Caco-2 (cell line): ENCODE measurements at regions of chr17 and their contacts with region 1.

Region 1: GRCh38 chr17:49677933-49678847 is at the start of gene SPOP:
- DNase-seq: peak; percentile 100
- H3K4me3 ChIP-seq: peak within 1 kb of the TSS; percentile 68
- H3K4me3 Mint-ChIP-seq: peak within 1 kb of the TSS; percentile 83
- H3K27ac Mint-ChIP-seq: peak within 1 kb of the TSS; percentile 92
- H3K4me1 ChIP-seq: peaks cover 5% of the 10 kb centered on the region; the same call in 1 of the 2 replicates
- H3K4me1 Mint-ChIP-seq: peaks cover 24% of the 10 kb centered on the region
- H3K27me3 ChIP-seq: no peaks in the 10 kb centered on the region
- H3K27me3 Mint-ChIP-seq: no peaks in the 10 kb centered on the region
- CTCF ChIP-seq: no peak
- total RNA-seq, gene SPOP: 70.2 and 78.4 TPM in 2 replicates

Region 2: GRCh38 chr17:49496183-49496866 is 181.9 kb before region 1 on chr17:
- CTCF ChIA-PET with region 1: interaction called, 4 read pairs
- POLR2A ChIA-PET with region 1: no interaction called
- intact Hi-C with region 1: loop called (anchors 5 kb)
- DNase-seq: peak in 1 of 2 experiments; percentile 95
- H3K4me3 ChIP-seq: peak overlapping the region; percentile 34
- H3K4me3 Mint-ChIP-seq: peak overlapping the region; percentile 67
- H3K27ac Mint-ChIP-seq: no peak overlapping the region
- H3K4me1 ChIP-seq: peaks cover 27% of the 10 kb centered on the region
- H3K4me1 Mint-ChIP-seq: peaks cover 14% of the 10 kb centered on the region
- H3K27me3 ChIP-seq: peaks cover 29% of the 10 kb centered on the region
- H3K27me3 Mint-ChIP-seq: peaks cover 59% of the 10 kb centered on the region
- CTCF ChIP-seq: peak; percentile 87 to 99

Region 3: GRCh38 chr17:49575579-49576087 is 102.6 kb before region 1 on chr17 and contains the start of gene NXPH3:
- CTCF ChIA-PET with region 1: interaction called, 44 read pairs
- POLR2A ChIA-PET with region 1: interaction called, 10 read pairs
- intact Hi-C with region 1: loop called (anchors 1 kb)
- DNase-seq: peak; percentile 89 to 98
- H3K4me3 ChIP-seq: peak within 1 kb of the TSS; percentile 87
- H3K4me3 Mint-ChIP-seq: peak within 1 kb of the TSS; percentile 77
- H3K27ac Mint-ChIP-seq: no peak within 1 kb of the TSS
- H3K4me1 ChIP-seq: peaks cover 16% of the 10 kb centered on the region
- H3K4me1 Mint-ChIP-seq: peaks cover 14% of the 10 kb centered on the region
- H3K27me3 ChIP-seq: no peaks in the 10 kb centered on the region; the same call in 1 of the 2 replicates
- H3K27me3 Mint-ChIP-seq: peaks cover 22% of the 10 kb centered on the region
- CTCF ChIP-seq: peak; percentile 59 to 80
- total RNA-seq, gene NXPH3: 1.7 and 2.0 TPM in 2 replicates

Region 4: GRCh38 chr17:49597928-49598655 is 80.1 kb before region 1 on chr17:
- CTCF ChIA-PET with region 1: interaction called, 13 read pairs
- POLR2A ChIA-PET with region 1: interaction called, 6 read pairs
- intact Hi-C with region 1: no loop called
- DNase-seq: no peak
- H3K4me3 ChIP-seq: no peak overlapping the region
- H3K4me3 Mint-ChIP-seq: no peak overlapping the region
- H3K27ac Mint-ChIP-seq: no peak overlapping the region
- H3K4me1 ChIP-seq: peaks cover 4% of the 10 kb centered on the region; the same call in 1 of the 2 replicates
- H3K4me1 Mint-ChIP-seq: peaks cover 15% of the 10 kb centered on the region
- H3K27me3 ChIP-seq: no peaks in the 10 kb centered on the region
- H3K27me3 Mint-ChIP-seq: no peaks in the 10 kb centered on the region
- CTCF ChIP-seq: no peak

Region 5: GRCh38 chr17:49646391-49647255 is 31.6 kb before region 1 on chr17:
- CTCF ChIA-PET with region 1: interaction called, 3 read pairs
- POLR2A ChIA-PET with region 1: interaction called, 10 read pairs
- intact Hi-C with region 1: loop called (anchors 2 kb)
- DNase-seq: peak in 1 of 2 experiments; percentile 31
- H3K4me3 ChIP-seq: no peak overlapping the region
- H3K4me3 Mint-ChIP-seq: no peak overlapping the region
- H3K27ac Mint-ChIP-seq: peak overlapping the region; percentile 11
- H3K4me1 ChIP-seq: peaks cover 13% of the 10 kb centered on the region
- H3K4me1 Mint-ChIP-seq: peaks cover 16% of the 10 kb centered on the region
- H3K27me3 ChIP-seq: no peaks in the 10 kb centered on the region
- H3K27me3 Mint-ChIP-seq: no peaks in the 10 kb centered on the region
- CTCF ChIP-seq: no peak

Region 6: DNA sequence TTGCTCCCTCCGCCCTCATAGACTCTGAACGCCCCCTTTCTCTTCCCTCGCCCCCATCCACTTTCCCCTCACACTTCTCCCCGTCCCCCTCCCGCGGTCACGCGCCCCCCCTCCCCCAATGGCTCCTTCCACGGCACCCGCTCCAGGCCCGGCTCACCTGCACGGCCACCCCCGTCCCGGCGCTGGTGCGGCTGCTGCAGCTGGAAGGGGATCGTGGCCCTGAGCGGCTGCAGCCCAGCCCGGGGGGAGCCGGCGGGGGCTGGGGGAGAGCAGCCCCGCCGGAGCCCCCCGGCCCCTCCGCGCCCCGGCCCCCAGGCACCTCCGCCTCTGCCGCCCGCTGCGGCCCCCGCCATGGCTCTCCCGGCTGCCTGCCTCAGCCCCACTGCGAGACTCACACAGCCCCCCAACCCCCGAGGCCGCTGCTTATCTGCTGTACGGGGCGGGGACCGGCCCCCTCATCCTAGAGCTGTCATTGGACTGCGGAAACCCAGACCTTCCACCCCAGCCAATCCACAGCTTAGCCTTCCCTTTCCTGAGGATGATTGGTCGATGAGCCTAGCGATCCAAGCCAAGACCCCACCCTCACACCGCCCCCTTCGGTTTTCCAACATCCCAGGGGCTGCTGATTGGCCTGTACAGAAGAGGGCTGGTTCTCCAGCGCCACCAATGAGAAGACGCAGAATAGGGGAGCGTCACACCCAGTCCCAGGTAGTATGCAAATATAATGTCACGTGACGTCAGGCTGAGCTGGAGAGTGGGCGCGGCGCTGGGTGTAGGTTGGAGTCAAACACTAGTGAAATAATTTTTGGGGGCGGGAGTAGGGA is 85.8 kb after region 1 on chr17 and contains the start of gene FAM117A:
- CTCF ChIA-PET with region 1: interaction called, 14 read pairs
- POLR2A ChIA-PET with region 1: interaction called, 10 read pairs
- intact Hi-C with region 1: loop called (anchors 1 kb)
- DNase-seq: peak; percentile 100
- H3K4me3 ChIP-seq: peak within 1 kb of the TSS; percentile 76
- H3K4me3 Mint-ChIP-seq: peak within 1 kb of the TSS; percentile 98
- H3K27ac Mint-ChIP-seq: peak within 1 kb of the TSS; percentile 81
- H3K4me1 ChIP-seq: peaks cover 9% of the 10 kb centered on the region
- H3K4me1 Mint-ChIP-seq: peaks cover 8% of the 10 kb centered on the region
- H3K27me3 ChIP-seq: 0 out of 2 replicates have a peak, but pooled peaks cover 1% of the 10 kb centered on the region
- H3K27me3 Mint-ChIP-seq: peaks cover 13% of the 10 kb centered on the region
- CTCF ChIP-seq: no peak
- total RNA-seq, gene FAM117A: 36.8 and 41.5 TPM in 2 replicates